ENCODE measurements at regions of chr20 and their contacts with region 1.

Region 1: GRCh38 chr20:5529331-5530148 is 212.8 kb upstream of the PROKR2 start:
- DNase-seq: peak; percentile 80 to 96
- H3K4me3 ChIP-seq: no peak overlapping the region
- CTCF ChIP-seq: peak in 1 of 3 donors; percentile 37
- POLR2A ChIP-seq: no peak

Region 2: GRCh38 chr20:5779071-5779900 is 249.7 kb after region 1 on chr20:
- intact Hi-C with region 1: no loop called
- DNase-seq: no peak
- H3K4me3 ChIP-seq: no peak overlapping the region
- CTCF ChIP-seq: no peak
- POLR2A ChIP-seq: no peak

Region 3: DNA sequence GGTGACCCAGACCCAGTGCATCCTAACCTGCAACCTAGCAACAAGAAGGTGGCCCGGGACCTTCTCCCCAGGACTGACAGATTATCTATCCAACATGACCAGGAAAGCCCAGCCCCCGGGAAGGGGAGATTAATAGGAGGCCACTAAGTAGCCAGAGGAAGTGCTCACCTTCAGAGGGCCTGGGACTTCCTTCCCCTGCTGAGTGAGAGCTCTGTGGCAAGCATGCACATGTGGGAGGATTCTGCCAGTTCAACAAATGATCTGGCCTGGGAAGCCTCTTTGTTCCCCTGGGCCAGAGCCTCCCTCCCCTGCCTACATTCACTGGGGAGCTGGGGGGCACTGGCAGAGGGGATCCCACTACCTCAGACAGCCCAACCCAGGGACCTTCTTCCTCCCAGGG is 260.3 kb after region 1 on chr20:
- intact Hi-C with region 1: loop called (anchors 5 kb)
- DNase-seq: peak in 1 of 2 donors; percentile 78
- H3K4me3 ChIP-seq: no peak overlapping the region
- CTCF ChIP-seq: no peak
- POLR2A ChIP-seq: no peak

Region 4: GRCh38 chr20:6075428-6076219 is 546.1 kb after region 1 on chr20:
- intact Hi-C with region 1: loop called (anchors 5 kb)
- DNase-seq: peak in 1 of 2 donors; percentile 77
- H3K4me3 ChIP-seq: no peak overlapping the region
- CTCF ChIP-seq: no peak
- POLR2A ChIP-seq: no peak